Heart left ventricle (tissue), 16 donors: ENCODE measurements at regions of chr3 and their contacts with region 1.

Region 1: GRCh38 chr3:159804726-159805410 is 183.8 kb upstream of the IL12A start:
- DNase-seq: peak in 4 of 5 donors; percentile 73 to 79 (median 78)
- ATAC-seq: peak; percentile 79 to 92 (median 92)
- H3K4me3 ChIP-seq: no peak overlapping the region
- H3K27ac ChIP-seq: peak overlapping the region in 9 of 12 donors; percentile 6 to 71 (median 52)
- H3K4me1 ChIP-seq: peaks cover 3 to 75% (median 37%) of the 10 kb centered on the region in 12 donors
- H3K27me3 ChIP-seq: no peaks in the 10 kb centered on the region
- CTCF ChIP-seq: peak; percentile 73 to 94 (median 90)
- POLR2A ChIP-seq: no peak

Region 2: DNA sequence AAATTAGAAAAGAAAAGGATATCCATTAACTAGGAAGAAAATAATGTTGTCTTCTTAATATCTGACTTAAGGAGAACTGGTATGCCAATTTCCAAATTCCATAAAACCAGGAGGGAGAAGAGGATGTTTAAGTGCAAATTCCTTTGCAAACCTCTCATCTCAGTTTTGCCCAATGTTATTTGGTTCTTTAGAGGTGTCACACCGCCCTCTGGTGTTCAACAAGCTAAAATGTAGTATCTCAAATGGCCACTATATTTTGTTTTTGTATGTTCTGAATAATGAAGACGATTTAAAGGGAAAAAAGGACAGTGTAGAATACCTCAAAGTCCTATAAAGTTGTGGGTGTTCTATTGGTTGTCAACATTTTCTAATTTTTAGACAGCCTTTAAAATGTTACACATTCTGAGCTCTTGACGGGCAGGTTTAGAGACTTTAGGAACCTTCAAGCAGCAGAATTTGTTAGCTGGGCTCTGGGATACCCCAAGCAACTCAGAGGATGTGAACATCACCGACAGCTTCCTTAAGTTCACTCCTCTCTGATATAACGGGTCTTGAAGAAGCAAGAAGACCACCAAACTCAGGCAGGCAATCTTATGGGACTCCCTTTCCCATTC is 544.7 kb before region 1 on chr3:
- intact Hi-C with region 1: loop called in 8 of 10 experiments (anchors 2 to 5 kb)
- DNase-seq: peak in 3 of 5 donors; percentile 20 to 32 (median 29)
- ATAC-seq: peak in 1 of 4 donors; percentile 49
- H3K4me3 ChIP-seq: no peak overlapping the region
- H3K27ac ChIP-seq: no peak overlapping the region
- H3K4me1 ChIP-seq: no peaks in the 10 kb centered on the region
- H3K27me3 ChIP-seq: no peaks in the 10 kb centered on the region
- CTCF ChIP-seq: peak; percentile 54 to 81 (median 71)
- POLR2A ChIP-seq: no peak

Region 3: DNA sequence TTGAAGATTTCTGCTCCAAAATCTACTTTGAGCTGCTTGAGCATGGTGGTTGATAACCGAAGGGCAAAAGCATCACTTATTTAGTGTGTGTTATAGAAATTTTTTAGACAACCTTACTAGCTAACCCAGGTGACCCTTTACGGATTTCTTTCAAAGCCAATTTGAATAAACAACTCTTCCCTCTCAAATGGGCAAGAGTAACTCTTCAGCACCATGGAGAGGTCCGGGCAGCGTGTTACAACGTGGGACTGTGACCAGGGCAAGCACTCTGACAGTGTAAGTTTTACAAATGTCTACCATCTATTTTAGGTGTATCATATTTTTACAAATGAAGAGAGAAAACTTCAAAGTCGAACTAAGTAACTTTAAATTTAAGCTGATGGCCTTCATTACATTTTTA is 531.3 kb before region 1 on chr3:
- intact Hi-C with region 1: loop called in 3 of 10 experiments (anchors 5 kb)
- DNase-seq: peak in 4 of 5 donors; percentile 25 to 52 (median 42)
- ATAC-seq: peak in 2 of 4 donors; percentile 68 to 71
- H3K4me3 ChIP-seq: no peak overlapping the region
- H3K27ac ChIP-seq: no peak overlapping the region
- H3K4me1 ChIP-seq: no peaks in the 10 kb centered on the region
- H3K27me3 ChIP-seq: no peaks in the 10 kb centered on the region
- CTCF ChIP-seq: no peak
- POLR2A ChIP-seq: no peak

Region 4: DNA sequence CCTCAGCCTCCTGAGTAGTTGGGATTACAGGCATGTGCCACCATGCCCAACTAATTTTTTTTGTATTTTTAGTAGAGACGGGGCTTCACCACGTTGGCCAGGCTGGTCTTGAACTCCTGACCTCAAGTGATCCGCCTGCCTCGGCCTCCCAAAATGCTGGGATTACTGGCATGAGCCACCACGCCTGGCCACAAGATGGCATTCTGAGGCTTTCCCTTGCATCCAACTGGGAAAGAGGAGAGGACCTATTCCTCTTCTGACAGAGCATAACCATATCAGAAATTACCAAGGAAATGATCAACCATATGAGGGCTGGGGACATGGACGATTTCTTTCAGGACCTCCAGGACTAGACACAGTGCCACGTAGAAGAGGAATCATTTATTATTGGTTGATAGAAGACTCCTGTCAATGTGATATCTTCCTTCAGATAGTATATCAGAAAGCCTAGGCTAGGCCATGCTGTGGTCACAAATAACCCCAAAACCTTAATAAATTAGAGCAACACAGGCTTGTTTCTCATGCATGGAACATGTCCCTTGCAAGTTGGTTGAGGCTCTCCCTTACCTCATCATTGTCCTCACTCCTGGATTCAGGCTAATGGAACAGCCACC is 188.5 kb before region 1 on chr3:
- intact Hi-C with region 1: loop called (anchors 1 to 5 kb)
- DNase-seq: peak; percentile 32 to 67 (median 47)
- ATAC-seq: peak; percentile 68 to 81 (median 76)
- H3K4me3 ChIP-seq: no peak overlapping the region
- H3K27ac ChIP-seq: no peak overlapping the region
- H3K4me1 ChIP-seq: peaks cover 0 to 11% (median 3%) of the 10 kb centered on the region in 12 donors
- H3K27me3 ChIP-seq: no peaks in the 10 kb centered on the region
- CTCF ChIP-seq: peak; percentile 33 to 76 (median 65)
- POLR2A ChIP-seq: no peak

Region 5: DNA sequence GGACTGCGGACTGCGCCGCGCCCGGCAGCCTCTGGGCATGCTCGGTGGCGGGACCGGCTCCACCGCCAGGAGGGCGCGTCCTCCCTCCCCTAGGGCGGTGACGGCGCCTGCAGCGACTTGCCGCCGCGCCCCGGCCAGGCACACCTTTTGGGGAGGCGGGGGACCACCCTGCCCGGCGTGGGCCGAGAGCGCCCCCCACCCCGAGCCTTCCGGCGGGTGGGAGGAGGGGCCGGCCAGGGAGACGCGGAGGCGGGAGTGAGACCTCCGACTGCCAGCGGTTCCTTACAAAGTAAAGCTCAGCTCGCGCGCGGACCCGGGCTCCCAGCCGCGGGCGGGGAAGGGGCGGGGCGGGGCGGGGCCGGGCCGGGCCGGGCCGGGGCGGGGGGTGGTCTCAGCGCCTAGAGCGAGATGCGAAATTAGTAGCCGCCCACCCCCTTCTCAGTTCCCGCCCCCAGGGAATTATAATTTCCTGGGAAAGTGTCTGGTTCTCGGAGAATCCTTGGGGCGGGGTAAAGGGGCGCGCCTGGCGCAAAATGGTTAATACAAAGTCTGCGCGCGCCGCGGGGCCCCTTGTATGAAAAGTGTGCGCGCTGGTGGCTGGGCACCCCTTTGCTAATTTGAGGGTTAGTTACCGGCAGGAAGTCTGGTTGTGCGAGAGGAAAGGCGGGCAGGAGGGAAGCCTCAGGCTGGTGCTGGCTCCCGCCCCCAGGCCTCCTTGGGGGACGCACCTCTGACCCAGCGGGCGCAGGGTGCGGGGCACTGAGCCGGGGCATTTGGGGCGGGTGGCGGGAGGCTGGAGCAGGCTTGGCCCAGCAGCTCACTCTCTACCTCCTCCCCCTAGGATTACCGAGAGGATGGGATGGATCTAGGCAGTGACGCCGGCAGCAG is 41.0 kb before region 1 on chr3:
- intact Hi-C with region 1: loop called in 8 of 10 experiments (anchors 2 to 5 kb)
- DNase-seq: peak; percentile 86 to 90 (median 89)
- ATAC-seq: peak; percentile 51 to 86 (median 72)
- H3K4me3 ChIP-seq: peak overlapping the region; percentile 57 to 96 (median 84)
- H3K27ac ChIP-seq: peak overlapping the region; percentile 91 to 100 (median 98)
- H3K4me1 ChIP-seq: peaks cover 0 to 65% (median 36%) of the 10 kb centered on the region in 12 donors
- H3K27me3 ChIP-seq: peaks cover 0 to 16% (median 0%) of the 10 kb centered on the region in 9 donors
- CTCF ChIP-seq: peak in 9 of 12 donors; percentile 8 to 50 (median 33)
- POLR2A ChIP-seq: peak in 1 of 2 donors; percentile 50